Endothelial cell of umbilical vein (primary cell): ENCODE measurements at regions of chr7 and their contacts with region 1.

Region 1: GRCh38 chr7:94183289-94183749 is 179.2 kb upstream of the BET1 start:
- DNase-seq: peak; percentile 99
- H3K4me3 ChIP-seq: no peak overlapping the region
- H3K27ac ChIP-seq: peak overlapping the region; percentile 98
- H3K4me1 ChIP-seq: peaks cover 49% of the 10 kb centered on the region
- H3K27me3 ChIP-seq: no peaks in the 10 kb centered on the region
- CTCF ChIP-seq: no peak
- POLR2A ChIP-seq: no peak

Region 2: DNA sequence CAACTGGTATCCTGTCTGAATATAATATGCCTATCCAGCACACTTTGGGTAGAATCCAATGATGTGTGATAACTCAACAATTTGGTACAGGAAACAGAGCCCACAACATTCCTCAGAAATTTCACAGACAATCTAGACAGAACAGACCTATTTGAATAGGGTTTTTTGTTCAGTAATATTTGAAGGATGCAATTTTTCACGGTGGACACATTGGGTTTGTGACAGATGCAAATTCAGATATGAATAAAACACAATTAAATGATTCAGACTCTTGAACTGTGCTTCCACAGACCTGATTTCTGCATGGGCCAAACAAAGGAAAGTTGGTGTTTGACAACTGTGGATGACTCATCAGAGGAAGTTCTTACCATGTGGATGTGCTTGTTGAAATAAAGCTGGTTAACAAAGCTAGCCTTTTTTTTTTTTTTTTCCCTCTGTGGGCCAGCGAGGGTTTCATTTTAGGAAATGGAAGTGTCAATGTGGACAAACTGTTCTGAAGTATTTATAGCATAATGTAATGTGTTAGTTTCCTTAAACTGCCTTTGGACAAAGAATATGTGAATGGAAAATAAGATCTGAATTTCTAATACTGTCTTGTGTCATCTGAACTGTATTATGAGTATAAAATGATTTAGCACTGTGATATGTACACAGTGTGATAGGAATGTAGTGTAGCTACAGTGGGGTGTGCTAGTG is 1550.0 kb before region 1 on chr7:
- CTCF ChIA-PET with region 1: no interaction called
- POLR2A ChIA-PET with region 1: no interaction called
- dilution Hi-C with region 1: no loop called
- intact Hi-C with region 1: loop called (anchors 5 kb)
- DNase-seq: peak; percentile 98
- H3K4me3 ChIP-seq: peak overlapping the region in 1 of 3 experiments; percentile 31
- H3K27ac ChIP-seq: peak overlapping the region; percentile 99
- H3K4me1 ChIP-seq: peaks cover 57% of the 10 kb centered on the region
- H3K27me3 ChIP-seq: no peaks in the 10 kb centered on the region
- CTCF ChIP-seq: no peak
- POLR2A ChIP-seq: peak; percentile 27

Region 3: DNA sequence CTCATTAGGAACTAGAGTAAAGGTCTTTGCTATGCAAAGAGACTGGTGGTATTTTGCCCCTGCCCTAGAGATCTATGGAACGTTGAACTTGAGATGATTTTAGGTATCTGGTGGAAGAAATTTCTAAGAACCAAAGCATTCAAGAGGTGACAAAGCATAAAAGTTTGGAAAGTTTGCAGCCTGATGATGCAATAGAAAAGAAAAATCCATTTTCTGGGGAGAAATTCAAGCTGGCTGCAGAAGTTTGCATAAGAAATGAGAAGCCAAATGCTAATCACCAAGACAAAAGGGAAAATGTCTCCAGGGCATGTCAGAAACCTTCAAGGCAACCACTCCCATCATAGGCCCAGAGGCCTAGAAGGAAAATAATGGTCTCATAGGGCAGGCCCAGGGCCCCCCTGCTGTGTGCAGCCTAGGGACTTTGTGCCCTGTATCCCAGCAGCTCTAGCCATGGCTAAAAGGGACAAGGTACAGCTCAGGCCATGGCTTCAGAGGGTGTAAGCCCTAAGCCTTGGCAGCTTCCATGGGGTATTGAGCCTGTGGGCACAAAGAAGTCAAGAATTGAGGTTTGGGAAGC is 309.2 kb before region 1 on chr7:
- CTCF ChIA-PET with region 1: no interaction called
- POLR2A ChIA-PET with region 1: no interaction called
- dilution Hi-C with region 1: no loop called
- intact Hi-C with region 1: no loop called
- DNase-seq: no peak
- H3K4me3 ChIP-seq: no peak overlapping the region
- H3K27ac ChIP-seq: no peak overlapping the region
- H3K4me1 ChIP-seq: no peaks in the 10 kb centered on the region
- H3K27me3 ChIP-seq: no peaks in the 10 kb centered on the region
- CTCF ChIP-seq: no peak
- POLR2A ChIP-seq: no peak

Region 4: DNA sequence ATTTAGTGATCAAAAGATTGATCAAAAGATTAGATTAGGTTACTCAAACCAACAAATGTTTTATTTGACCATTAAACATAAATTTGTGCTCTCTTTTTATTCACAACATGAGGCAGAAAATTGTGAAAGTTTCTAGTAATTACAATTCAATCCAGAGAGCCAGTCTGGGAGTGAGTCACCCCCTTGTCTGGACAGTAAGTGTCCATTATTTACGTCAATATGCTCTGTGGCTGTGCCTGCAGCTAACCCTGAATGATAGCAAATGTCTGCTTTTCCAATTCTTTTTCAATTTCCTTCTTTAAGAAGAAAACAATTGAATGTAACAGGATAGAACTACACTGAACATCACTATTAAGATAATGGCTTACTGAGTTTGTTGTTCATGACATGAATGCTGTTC is 233.9 kb before region 1 on chr7:
- CTCF ChIA-PET with region 1: interaction called, 5 read pairs
- POLR2A ChIA-PET with region 1: no interaction called
- dilution Hi-C with region 1: no loop called
- intact Hi-C with region 1: loop called (anchors 1 kb)
- DNase-seq: peak; percentile 84
- H3K4me3 ChIP-seq: no peak overlapping the region
- H3K27ac ChIP-seq: peak overlapping the region; percentile 72
- H3K4me1 ChIP-seq: peaks cover 38% of the 10 kb centered on the region
- H3K27me3 ChIP-seq: no peaks in the 10 kb centered on the region
- CTCF ChIP-seq: no peak
- POLR2A ChIP-seq: no peak

Region 5: DNA sequence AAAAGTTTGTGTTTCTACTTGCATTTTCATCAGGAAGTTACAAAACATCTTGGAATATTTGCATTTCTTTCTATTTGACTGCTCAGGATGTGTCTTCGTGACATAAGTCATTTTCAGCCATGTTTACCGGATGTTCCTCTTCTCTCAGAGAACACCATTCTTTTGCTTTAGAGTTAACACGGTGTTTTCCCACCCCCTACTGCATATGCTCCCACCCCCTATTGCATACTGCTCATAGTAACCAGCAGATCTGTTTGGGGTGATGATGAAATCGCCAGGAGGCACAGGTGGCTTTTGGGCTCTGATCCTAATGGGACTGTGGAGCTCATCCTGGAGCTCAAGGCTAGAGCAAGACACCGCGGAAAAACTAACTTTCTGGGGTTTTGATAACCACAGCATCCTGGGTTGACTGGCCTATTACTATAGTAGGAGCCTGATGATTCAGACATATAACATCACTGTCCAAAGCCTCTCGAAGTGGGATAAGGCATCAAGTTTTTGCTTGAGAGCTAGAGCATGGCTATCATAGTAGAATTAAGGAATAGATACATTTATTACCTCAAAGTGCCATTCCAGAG is 114.1 kb before region 1 on chr7:
- CTCF ChIA-PET with region 1: interaction called, 3 read pairs
- POLR2A ChIA-PET with region 1: no interaction called
- dilution Hi-C with region 1: no loop called
- intact Hi-C with region 1: loop called (anchors 2 kb)
- DNase-seq: no peak
- H3K4me3 ChIP-seq: no peak overlapping the region
- H3K27ac ChIP-seq: no peak overlapping the region
- H3K4me1 ChIP-seq: peaks cover 20% of the 10 kb centered on the region
- H3K27me3 ChIP-seq: peaks cover 50 to 74% of the 10 kb centered on the region in 2 experiments
- CTCF ChIP-seq: no peak
- POLR2A ChIP-seq: no peak

Region 6: GRCh38 chr7:94223375-94224070 is 40.2 kb after region 1 on chr7:
- CTCF ChIA-PET with region 1: interaction called, 5 read pairs
- POLR2A ChIA-PET with region 1: no interaction called
- dilution Hi-C with region 1: no loop called
- intact Hi-C with region 1: loop called (anchors 1 kb)
- DNase-seq: peak; percentile 77
- H3K4me3 ChIP-seq: no peak overlapping the region
- H3K27ac ChIP-seq: no peak overlapping the region
- H3K4me1 ChIP-seq: peaks cover 8% of the 10 kb centered on the region
- H3K27me3 ChIP-seq: no peaks in the 10 kb centered on the region
- CTCF ChIP-seq: peak; percentile 55 to 67
- POLR2A ChIP-seq: no peak

Region 7: GRCh38 chr7:94374231-94374630 is 190.9 kb after region 1 on chr7:
- CTCF ChIA-PET with region 1: no interaction called
- POLR2A ChIA-PET with region 1: no interaction called
- dilution Hi-C with region 1: no loop called
- intact Hi-C with region 1: loop called (anchors 2 kb)
- DNase-seq: peak; percentile 92
- H3K4me3 ChIP-seq: no peak overlapping the region
- H3K27ac ChIP-seq: peak overlapping the region; percentile 85
- H3K4me1 ChIP-seq: peaks cover 21% of the 10 kb centered on the region
- H3K27me3 ChIP-seq: no peaks in the 10 kb centered on the region
- CTCF ChIP-seq: no peak
- POLR2A ChIP-seq: no peak